ENCODE measurements at regions of chr20 and their contacts with region 1.

Region 1: DNA sequence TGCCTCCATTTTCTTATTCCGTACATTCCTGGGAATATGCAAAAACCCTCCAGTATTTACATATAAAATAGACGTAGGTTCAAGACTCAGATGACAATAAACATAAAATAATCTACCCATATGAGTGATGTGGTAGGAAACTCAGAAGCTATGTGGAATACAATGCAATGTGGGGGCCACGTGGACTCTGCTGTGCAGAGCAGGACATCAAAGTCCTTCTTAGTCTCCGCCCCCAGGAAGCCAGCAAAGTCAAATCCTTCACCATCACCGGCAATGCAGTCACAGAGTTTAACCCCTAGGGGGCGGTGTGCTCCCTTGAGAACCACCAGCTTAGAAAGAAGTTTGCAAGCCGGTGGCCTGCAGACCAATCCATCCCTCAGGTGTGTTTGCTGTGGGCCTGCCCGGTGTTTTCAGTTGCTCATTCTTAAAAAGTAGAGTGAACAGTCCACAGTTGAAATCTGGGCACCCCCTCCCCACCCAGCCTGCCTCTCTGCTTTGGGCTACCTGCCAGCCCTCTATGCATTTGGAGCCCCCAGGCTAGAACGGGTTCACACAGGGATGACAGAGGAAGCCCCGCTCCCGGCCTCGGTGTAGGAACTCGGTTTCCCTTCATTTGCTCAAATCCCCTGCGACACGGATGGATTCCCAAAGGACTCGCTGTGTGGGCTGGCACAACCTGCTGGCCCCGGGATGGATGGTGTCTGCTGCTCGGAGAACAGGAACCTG is 59.9 kb downstream of the SULF2 start:
- DNase-seq: peak; percentile 80
- H3K4me3 ChIP-seq: no peak overlapping the region
- H3K27ac ChIP-seq: no peak overlapping the region
- H3K4me1 ChIP-seq: peaks cover 0 to 18% (median 14%) of the 10 kb centered on the region in 4 donors
- H3K27me3 ChIP-seq: no peaks in the 10 kb centered on the region
- CTCF ChIP-seq: peak; percentile 31 to 86 (median 81)
- EP300 ChIP-seq: no peak
- POLR2A ChIP-seq: no peak

Region 2: DNA sequence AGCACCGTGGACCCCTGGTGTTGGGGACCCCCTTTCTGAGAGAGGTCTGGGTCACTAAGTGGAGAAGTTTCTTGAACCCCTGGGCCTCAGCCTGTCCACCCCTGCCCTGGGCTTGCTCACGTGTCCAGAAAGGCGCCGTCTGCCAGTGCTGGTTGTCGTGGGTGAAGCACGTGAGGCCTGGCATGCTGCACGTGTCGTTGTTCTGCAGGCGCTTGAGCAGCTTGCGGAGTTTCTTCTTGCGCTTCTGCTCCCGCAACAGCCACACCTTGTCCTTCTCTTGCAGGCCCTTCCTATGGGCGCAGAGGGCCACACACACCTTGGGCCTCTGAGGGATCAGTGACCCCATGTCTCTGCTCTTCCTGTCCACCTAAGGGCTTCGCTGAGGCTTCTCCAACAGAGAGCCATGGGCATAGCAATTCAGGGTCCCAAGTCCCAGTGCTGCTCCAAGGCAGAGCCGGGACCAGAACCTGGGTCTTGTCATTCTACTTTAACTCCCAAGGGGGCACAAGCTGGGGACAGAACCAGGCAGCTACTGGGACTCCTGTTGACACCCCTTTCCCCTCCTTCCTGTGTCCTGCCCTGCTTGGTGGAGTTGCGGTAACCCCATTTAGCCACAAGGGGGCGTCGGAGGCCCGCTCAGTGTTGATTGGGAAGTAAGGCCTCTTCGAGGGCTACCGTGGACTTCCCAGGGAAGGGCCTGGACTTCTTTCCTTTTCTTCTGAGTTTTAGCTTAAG is 61.9 kb before region 1 on chr20:
- intact Hi-C with region 1: loop called (anchors 5 kb)
- DNase-seq: peak; percentile 88
- H3K4me3 ChIP-seq: no peak overlapping the region
- H3K27ac ChIP-seq: no peak overlapping the region
- H3K4me1 ChIP-seq: peaks cover 0 to 9% (median 5%) of the 10 kb centered on the region in 4 donors
- H3K27me3 ChIP-seq: no peaks in the 10 kb centered on the region
- CTCF ChIP-seq: peak; percentile 82 to 98 (median 92)
- EP300 ChIP-seq: no peak
- POLR2A ChIP-seq: no peak

Region 3: GRCh38 chr20:47686545-47686944 is 38.9 kb before region 1 on chr20:
- intact Hi-C with region 1: loop called (anchors 5 kb)
- DNase-seq: no peak
- H3K4me3 ChIP-seq: no peak overlapping the region
- H3K27ac ChIP-seq: peak overlapping the region in 3 of 4 donors; percentile 28 to 57 (median 55)
- H3K4me1 ChIP-seq: peaks cover 0 to 27% (median 25%) of the 10 kb centered on the region in 4 donors
- H3K27me3 ChIP-seq: no peaks in the 10 kb centered on the region
- CTCF ChIP-seq: no peak
- EP300 ChIP-seq: no peak
- POLR2A ChIP-seq: peak in 1 of 2 donors; percentile 3

Region 4: DNA sequence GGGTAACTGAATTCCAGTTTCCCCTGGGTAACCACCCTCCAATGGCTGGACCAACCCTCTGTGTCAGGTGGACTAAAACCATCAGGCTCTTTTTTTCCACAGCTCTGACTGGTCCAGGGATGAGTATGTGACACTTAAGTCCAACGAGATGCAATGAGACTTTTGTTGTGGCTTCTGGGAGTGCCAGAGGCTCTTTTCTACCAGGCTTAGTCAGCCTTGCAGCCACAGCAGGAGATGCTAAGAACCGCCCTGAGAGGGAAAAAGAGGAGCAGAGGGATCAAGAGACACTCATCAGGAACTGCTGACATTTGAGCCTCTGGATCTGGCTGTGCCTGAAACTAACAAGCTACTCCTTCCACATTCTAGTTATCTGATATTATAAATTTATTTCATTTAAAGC is 330.8 kb after region 1 on chr20:
- intact Hi-C with region 1: no loop called
- DNase-seq: no peak
- H3K4me3 ChIP-seq: no peak overlapping the region
- H3K27ac ChIP-seq: no peak overlapping the region
- H3K4me1 ChIP-seq: no peaks in the 10 kb centered on the region
- H3K27me3 ChIP-seq: no peaks in the 10 kb centered on the region
- CTCF ChIP-seq: no peak
- EP300 ChIP-seq: no peak
- POLR2A ChIP-seq: no peak